ACHN (cell line): ENCODE measurements at regions of chr10 and their contacts with region 1.

Region 1: DNA sequence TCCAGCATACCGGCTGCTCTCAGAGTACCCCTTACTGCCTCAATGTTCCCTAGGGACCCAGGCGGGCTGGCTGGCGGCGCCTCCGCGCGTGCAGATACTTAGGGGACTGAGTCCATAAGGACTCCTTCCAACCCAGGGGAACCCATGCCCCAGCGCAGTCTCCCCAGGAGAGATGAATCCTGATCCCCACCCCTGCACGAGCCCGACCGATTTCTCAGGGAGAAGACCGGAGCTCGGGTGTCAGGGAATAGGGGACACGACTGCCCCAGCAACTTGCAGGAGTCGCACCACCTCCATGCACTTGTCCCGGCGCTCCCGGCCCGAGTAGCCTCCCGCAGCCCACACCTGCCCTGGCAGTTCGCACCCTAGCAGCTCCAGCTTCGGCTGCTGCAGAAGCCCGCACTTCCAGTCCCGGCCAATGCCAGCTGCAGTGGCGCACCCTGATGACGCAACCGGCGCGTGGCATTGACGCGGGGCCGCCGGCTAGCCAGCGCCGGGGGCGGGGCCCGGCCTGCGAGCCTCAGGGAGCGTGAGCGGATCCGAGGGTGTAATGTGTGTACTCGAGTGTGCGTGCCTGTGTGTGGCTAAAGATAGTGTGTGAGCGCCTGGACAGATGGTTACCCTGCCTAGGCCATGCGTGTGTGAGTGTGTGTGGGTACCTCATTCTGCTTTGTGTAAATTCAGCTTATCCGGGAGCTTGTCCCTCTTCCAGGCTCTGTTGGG is at the start of gene GPAM:
- DNase-seq: peak; percentile 94

Region 2: GRCh38 chr10:111289461-111289860 is 894.0 kb before region 1 on chr10:
- in situ Hi-C with region 1: no loop called
- DNase-seq: no peak

Region 3: DNA sequence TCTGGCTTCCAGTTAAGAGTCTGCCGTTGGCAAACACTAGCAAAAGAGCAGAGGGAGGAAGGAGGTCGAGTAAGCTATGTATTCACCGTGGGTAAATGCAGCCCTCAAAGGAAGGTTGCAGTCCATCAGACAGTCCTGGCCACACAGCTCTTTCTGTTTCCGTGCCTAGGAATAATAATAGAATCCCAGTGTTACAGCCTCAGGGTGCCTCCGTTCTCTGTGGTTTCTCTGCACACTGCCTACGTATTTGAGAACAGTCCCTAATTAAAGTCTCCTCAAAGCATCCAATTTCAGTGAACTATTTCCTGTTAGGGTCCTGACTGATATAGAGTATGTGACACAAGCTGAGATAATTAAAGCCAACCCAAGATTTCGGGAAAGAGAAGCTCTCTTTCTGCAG is 176.7 kb before region 1 on chr10:
- in situ Hi-C with region 1: no loop called
- DNase-seq: no peak

Region 4: DNA sequence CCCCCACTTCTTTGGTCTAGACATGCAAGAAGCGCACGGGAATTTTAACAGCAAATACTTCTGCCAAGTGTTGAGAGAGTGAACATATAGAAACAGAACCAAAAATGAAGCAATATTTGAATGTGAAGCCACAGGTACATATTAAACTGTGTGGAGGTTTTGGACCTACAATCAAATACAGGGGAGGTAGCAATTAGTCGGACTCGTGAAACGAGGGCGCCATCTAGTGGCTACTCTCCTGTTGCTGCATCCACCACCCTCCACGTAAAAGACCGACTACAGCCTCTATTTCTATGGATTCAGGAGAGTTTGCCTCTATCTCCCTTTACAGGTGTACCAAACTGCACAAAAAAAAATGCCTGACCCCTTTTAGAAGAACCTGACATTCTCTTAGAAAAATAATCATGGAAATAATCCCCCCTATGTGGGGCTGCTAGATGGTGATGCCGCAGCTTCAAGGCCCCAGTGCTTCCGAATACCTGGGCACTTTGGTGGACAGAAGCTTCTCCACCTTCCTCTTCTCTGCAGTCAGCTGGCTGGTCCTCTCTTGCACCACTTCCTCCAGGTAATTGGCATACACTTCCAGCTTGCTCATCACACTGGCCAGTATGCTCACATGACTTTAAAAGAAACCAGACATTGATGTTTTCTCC is 131.5 kb after region 1 on chr10:
- in situ Hi-C with region 1: loop called (anchors 25 kb)
- DNase-seq: peak; percentile 65

Region 5: GRCh38 chr10:112546474-112546873 is 363.0 kb after region 1 on chr10:
- in situ Hi-C with region 1: no loop called
- DNase-seq: no peak